AG04450 (cell line): ENCODE measurements at regions of chr5 and their contacts with region 1.

Region 1: DNA sequence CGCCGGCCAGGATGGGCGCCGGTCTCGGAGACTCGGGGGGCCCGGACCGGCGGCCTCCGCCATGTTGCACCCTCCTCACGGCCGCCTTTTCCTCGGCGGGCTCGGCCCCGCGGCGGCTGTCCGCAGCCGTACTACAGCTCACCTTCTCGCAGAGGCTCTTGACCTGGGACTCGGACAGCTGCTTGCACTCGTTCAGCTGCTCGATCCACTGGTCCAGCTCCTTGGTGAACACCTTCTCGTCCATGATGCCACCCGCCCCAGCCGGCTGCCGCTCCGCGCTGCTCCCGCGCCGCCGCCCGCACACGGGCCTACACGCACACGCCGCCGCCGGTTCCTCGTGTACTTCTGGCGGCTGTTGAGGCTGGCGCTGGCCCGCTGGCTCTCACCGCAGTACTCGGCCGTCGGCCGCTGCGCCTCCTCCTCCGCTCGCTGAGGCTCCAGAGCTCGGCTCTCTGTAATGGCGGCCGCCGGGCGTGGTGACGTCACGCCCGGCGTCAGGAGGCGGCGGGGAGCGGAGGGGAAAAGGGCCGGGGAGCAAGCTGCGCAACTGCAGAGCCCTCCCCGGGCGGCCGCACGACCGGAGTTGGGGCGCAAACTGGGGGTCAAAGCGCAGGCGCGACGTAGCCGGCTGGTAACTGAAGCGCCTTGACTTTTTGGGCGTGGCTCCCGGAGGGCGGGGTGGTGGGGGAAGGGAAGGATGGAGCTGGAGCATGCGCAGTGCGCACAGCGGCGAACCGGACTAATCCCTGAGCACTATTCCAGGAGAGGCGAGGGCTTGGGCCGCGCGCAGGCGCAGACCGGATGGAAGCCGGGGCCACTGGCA is at the start of gene PPP2CA:
- DNase-seq: peak; percentile 98
- H3K4me3 ChIP-seq: peak within 1 kb of the TSS; percentile 96
- H3K27ac ChIP-seq: peak within 1 kb of the TSS; percentile 96
- H3K27me3 ChIP-seq: no peaks in the 10 kb centered on the region
- CTCF ChIP-seq: no peak
- polyA plus RNA-seq, gene PPP2CA: 175 and 252 TPM in 2 replicates

Region 2: DNA sequence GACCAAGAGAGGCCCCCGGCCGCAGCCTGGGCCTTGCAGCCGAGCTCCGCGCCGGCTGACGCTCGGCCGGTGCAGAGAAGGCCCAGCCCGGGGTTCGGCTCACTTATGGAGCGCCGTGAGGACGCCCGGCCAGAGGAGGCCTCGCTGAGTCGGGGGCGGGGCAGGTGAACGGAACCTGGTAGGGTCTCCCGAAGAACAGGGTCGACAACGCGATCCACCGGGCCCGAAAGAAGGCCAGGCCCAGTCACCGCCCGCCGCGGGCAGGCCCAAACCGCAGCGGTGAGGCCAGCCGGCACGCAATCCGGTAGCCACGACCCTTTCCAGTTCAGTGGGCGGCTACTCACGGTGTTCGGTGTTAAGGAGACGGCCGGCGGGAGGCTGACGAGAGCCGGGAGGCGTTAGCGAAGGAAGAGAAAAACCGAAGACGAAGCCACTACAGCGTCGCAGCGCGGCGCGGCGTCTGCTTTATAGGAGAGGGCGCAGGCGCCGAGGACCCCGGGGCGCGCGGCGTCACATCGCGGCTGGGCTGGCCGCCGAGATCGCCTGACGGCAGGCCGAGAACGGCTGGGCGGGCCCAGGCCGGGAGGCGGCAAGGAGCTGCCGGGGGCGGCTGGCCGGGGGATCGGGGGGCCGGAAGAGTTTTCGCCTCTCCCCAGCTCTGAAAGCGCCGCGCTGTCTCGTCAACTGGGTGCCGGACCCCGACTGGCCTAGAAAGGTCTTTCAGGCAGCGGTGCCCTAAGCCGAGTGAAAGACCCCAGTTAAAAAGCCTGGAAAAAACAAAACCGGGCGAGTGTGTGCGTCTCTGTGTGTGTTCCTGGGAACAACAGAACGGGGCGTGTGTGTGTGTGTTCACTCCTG is 49.1 kb before region 1 on chr5 and contains the start of gene SKP1:
- CTCF ChIA-PET with region 1: interaction called, 37 read pairs
- POLR2A ChIA-PET with region 1: interaction called, 34 read pairs
- DNase-seq: peak; percentile 48
- H3K4me3 ChIP-seq: peak within 1 kb of the TSS; percentile 90
- H3K27ac ChIP-seq: peak within 1 kb of the TSS; percentile 97
- H3K27me3 ChIP-seq: no peaks in the 10 kb centered on the region
- CTCF ChIP-seq: no peak
- polyA plus RNA-seq, gene SKP1: 725 and 1,036 TPM in 2 replicates

Region 3: GRCh38 chr5:134184155-134185135 is 41.4 kb before region 1 on chr5:
- CTCF ChIA-PET with region 1: interaction called, 37 read pairs
- POLR2A ChIA-PET with region 1: interaction called, 5 read pairs
- DNase-seq: no peak
- H3K4me3 ChIP-seq: no peak overlapping the region
- H3K27ac ChIP-seq: no peak overlapping the region
- H3K27me3 ChIP-seq: no peaks in the 10 kb centered on the region
- CTCF ChIP-seq: peak; percentile 97

Region 4: DNA sequence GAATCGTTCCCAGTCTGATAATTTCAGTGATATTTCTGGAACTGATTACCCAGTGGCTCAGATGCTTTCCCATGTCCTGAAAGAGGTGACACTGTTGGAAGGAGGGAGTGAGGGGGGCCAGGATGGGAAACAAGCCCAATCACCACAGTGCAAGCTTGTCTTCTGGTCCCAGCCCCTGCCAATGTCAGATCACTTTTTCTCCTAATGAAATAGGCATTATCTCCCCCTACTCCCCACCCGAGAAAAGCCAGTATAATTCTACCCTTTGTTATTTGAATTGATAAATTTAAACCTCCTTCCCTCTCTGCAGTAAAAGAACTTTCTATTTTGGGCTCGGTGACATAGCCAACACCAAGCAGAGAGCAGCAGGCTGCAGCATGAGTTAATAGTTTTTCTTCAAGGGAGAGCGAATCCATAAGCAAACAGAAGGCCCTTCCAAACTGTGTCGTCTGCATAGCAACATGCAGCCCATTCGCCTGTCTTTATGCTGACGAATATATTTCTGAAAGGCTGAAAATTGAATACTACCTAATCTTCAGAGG is 14.7 kb after region 1 on chr5:
- CTCF ChIA-PET with region 1: interaction called, 8 read pairs
- POLR2A ChIA-PET with region 1: interaction called, 38 read pairs
- DNase-seq: peak; percentile 61
- H3K4me3 ChIP-seq: no peak overlapping the region; the same call in 1 of the 2 replicates
- H3K27ac ChIP-seq: peak overlapping the region; percentile 55
- H3K27me3 ChIP-seq: no peaks in the 10 kb centered on the region
- CTCF ChIP-seq: no peak

Region 5: DNA sequence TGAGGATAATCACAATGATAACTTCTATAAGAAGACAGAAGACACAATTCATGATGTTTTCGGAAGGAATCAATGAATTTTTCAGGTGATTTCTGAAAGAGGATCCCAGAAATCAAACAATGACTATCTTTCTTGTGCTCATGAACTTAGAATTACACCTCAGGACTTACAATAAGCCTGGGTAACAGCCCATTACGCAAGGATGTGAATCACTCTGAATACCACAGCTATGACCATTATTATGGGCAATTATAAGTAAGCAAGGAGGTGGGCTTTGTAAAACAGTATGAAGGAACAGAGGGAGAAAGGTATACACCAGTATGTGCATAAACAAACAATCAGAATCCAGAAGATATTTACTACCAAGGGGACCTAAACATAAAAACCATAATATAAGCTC is 21.6 kb after region 1 on chr5:
- CTCF ChIA-PET with region 1: interaction called, 7 read pairs
- POLR2A ChIA-PET with region 1: interaction called, 38 read pairs
- DNase-seq: peak; percentile 72
- H3K4me3 ChIP-seq: no peak overlapping the region
- H3K27ac ChIP-seq: no peak overlapping the region
- H3K27me3 ChIP-seq: no peaks in the 10 kb centered on the region
- CTCF ChIP-seq: no peak

Region 6: GRCh38 chr5:134312796-134313195 is 87.0 kb after region 1 on chr5:
- CTCF ChIA-PET with region 1: no interaction called
- POLR2A ChIA-PET with region 1: no interaction called
- DNase-seq: no peak
- H3K4me3 ChIP-seq: no peak overlapping the region
- H3K27ac ChIP-seq: no peak overlapping the region
- H3K27me3 ChIP-seq: no peaks in the 10 kb centered on the region
- CTCF ChIP-seq: no peak

Region 7: DNA sequence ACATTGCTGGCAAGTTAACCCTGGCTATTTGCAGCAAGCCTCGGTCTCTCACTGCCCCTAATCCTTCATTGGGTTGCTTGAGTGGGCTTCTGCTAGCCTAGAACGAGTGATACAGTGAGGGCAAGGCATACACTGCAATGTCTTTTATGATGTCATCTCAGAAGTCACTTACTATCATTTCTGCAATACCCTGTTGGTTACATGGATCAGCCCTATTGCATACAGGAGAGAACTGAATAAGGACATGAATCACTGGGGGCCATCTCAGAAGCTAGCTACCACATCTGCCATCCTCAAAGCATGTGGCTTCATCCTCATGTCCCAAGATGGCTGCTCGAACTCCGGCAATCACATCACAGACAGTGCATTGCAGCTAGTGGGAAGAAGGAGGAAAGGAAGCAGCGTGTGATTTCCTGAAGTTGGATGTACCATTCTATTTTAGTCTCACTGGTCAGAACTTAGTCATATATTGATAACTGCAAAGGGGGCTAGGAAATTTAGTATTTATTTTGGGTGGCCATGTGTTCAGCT is 219.2 kb after region 1 on chr5:
- CTCF ChIA-PET with region 1: no interaction called
- POLR2A ChIA-PET with region 1: interaction called, 10 read pairs
- DNase-seq: no peak
- H3K4me3 ChIP-seq: no peak overlapping the region
- H3K27ac ChIP-seq: no peak overlapping the region
- H3K27me3 ChIP-seq: no peaks in the 10 kb centered on the region
- CTCF ChIP-seq: no peak